Ascending aorta (tissue), 2 donors: ENCODE measurements at regions of chr17 and their contacts with region 1.

Region 1: GRCh38 chr17:76240461-76241203 is at the start of gene RNF157:
- DNase-seq: peak in 1 of 2 donors; percentile 76
- H3K4me3 ChIP-seq: peak within 1 kb of the TSS; percentile 59 to 80
- H3K27ac ChIP-seq: peak within 1 kb of the TSS in 1 of 2 donors; percentile 20
- H3K4me1 ChIP-seq: peaks cover 3 to 11% of the 10 kb centered on the region in 2 donors
- H3K27me3 ChIP-seq: no peaks in the 10 kb centered on the region
- CTCF ChIP-seq: no peak
- total RNA-seq, gene RNF157: 2.4 TPM

Region 2: DNA sequence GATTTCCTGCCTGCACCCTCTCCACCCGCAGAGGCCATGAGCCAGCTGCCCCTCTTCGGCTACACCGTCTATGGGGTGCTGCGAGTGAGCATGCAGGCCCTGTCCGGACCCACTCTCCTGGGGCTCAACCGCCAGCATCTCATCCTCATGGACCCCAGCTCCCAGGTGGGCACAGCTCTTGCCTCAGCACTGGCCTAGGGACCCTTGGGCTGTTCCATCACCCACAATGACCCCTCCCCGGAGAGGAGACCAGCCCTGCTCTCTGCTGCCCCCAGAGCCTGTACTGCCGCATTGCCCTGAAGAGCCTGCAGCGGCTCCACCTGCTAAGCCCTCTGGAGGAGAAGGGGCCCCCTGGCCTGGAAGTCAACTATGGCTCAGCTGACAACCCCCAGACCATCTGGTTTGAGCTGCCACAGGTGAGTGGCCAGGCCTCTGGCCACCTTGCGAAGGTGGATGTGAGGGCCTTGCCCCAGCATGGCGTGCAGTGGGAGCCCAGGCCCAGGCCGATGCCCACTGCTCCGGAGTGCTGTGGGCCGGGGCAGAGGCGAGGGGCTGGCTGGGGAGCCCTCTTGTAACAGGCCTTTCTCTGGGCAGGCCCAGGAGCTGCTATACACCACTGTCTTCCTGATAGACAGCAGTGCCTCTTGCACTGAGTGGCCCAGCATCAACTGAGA is 614.7 kb before region 1 on chr17:
- intact Hi-C with region 1: no loop called
- DNase-seq: no peak
- H3K4me3 ChIP-seq: no peak overlapping the region
- H3K27ac ChIP-seq: no peak overlapping the region
- H3K4me1 ChIP-seq: no peaks in the 10 kb centered on the region
- H3K27me3 ChIP-seq: no peaks in the 10 kb centered on the region
- CTCF ChIP-seq: peak in 1 of 3 experiments; percentile 42

Region 3: DNA sequence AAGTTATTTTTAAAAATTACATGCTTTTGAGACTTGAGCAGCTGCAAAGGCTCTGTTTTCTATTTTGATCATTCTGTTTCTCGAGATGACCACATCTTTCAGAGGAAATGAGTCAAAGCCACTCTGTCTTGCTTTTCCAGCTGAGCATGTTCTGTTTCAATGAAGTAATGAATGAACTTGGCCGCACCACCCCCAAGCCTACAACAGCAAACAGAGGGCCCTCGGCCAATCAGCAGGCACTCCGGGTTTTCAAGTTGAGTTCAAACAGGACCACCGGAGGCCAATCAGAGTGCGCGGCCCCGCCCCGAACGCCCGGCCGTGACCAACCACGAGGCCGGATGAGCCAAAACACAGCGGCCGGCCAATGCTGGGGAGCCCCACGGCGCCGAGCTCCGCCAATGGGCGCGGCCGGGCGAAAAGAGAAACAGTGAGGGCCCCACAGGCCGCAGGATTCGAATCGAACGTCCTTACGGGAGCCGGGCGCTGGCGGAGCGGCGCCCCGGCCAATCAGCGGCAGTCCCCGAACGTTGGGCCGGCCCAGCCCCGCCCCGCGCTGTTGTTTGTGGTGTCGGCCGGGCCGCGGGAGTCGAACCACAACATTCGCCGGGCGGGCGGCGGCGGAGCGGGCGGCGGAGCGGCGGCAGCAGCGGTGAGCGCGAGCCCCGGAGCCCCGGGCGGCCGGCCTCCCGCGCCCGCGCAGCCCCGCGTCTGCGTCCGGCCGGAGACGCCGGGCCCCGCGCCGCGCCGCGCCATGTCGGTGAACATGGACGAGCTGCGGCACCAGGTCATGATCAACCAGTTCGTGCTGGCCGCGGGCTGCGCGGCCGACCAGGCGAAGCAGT is 24.3 kb after region 1 on chr17 and contains the start of gene UBALD2:
- intact Hi-C with region 1: loop called (anchors 2 kb)
- DNase-seq: peak; percentile 99 to 100
- H3K4me3 ChIP-seq: peak within 1 kb of the TSS; percentile 74 to 95
- H3K27ac ChIP-seq: peak within 1 kb of the TSS; percentile 89 to 90
- H3K4me1 ChIP-seq: peaks cover 0 to 26% of the 10 kb centered on the region in 2 donors
- H3K27me3 ChIP-seq: no peaks in the 10 kb centered on the region
- CTCF ChIP-seq: no peak
- total RNA-seq, gene UBALD2: 15.9 TPM

Region 4: GRCh38 chr17:76278952-76279741 is 38.5 kb after region 1 on chr17:
- intact Hi-C with region 1: loop called (anchors 5 kb)
- DNase-seq: peak; percentile 47 to 92
- H3K4me3 ChIP-seq: no peak overlapping the region
- H3K27ac ChIP-seq: no peak overlapping the region
- H3K4me1 ChIP-seq: peaks cover 0 to 3% of the 10 kb centered on the region in 2 donors
- H3K27me3 ChIP-seq: no peaks in the 10 kb centered on the region
- CTCF ChIP-seq: peak; percentile 86 to 98 (median 93)

Region 5: GRCh38 chr17:76296186-76296585 is 55.6 kb after region 1 on chr17:
- intact Hi-C with region 1: no loop called
- DNase-seq: no peak
- H3K4me3 ChIP-seq: no peak overlapping the region
- H3K27ac ChIP-seq: no peak overlapping the region
- H3K4me1 ChIP-seq: no peaks in the 10 kb centered on the region
- H3K27me3 ChIP-seq: no peaks in the 10 kb centered on the region
- CTCF ChIP-seq: no peak